Endothelial cell of umbilical vein (primary cell): ENCODE measurements at regions of chr5 and their contacts with region 1.

Region 1: GRCh38 chr5:14108170-14108996 is 34.8 kb upstream of the TRIO start:
- DNase-seq: peak; percentile 77
- H3K4me3 ChIP-seq: peak overlapping the region in 2 of 3 experiments; percentile 5
- H3K27ac ChIP-seq: no peak overlapping the region
- H3K4me1 ChIP-seq: peaks cover 30% of the 10 kb centered on the region
- H3K27me3 ChIP-seq: no peaks in the 10 kb centered on the region
- CTCF ChIP-seq: peak; percentile 62 to 82
- POLR2A ChIP-seq: no peak

Region 2: DNA sequence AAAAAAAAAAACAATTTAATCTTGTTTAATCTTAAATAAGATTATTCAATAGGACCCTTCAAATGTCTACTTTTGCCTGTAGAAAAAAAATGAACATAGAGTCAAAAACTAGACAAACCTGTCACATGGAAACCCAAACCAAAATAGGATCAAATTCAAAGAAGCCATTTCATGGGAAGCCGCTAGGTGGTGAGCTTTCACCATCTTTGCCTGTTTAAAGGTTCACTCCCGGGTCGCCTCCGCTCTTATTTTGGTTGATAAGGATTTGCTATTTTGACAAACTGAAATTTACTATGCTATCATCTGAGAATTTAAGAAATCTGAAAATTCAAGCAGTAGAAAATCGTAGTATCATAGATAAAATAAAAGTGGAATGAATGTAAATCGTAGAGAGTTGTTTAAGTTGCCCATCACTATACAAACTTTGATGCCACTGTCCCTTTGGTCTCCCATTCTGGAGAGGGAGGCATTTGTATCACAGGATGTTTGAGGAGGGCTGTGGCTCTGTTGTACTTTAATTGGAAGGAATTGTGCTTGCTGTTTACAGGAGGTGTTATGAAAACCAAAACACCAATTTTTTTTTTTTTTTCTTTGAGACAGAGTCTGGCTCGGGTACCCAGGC is 120.4 kb before region 1 on chr5:
- CTCF ChIA-PET with region 1: interaction called, 5 read pairs
- POLR2A ChIA-PET with region 1: no interaction called
- dilution Hi-C with region 1: loop called (anchors 25 kb)
- intact Hi-C with region 1: loop called (anchors 1 kb)
- DNase-seq: peak; percentile 64
- H3K4me3 ChIP-seq: no peak overlapping the region
- H3K27ac ChIP-seq: no peak overlapping the region
- H3K4me1 ChIP-seq: peaks cover 16% of the 10 kb centered on the region
- H3K27me3 ChIP-seq: no peaks in the 10 kb centered on the region
- CTCF ChIP-seq: peak; percentile 69 to 84
- POLR2A ChIP-seq: no peak

Region 3: DNA sequence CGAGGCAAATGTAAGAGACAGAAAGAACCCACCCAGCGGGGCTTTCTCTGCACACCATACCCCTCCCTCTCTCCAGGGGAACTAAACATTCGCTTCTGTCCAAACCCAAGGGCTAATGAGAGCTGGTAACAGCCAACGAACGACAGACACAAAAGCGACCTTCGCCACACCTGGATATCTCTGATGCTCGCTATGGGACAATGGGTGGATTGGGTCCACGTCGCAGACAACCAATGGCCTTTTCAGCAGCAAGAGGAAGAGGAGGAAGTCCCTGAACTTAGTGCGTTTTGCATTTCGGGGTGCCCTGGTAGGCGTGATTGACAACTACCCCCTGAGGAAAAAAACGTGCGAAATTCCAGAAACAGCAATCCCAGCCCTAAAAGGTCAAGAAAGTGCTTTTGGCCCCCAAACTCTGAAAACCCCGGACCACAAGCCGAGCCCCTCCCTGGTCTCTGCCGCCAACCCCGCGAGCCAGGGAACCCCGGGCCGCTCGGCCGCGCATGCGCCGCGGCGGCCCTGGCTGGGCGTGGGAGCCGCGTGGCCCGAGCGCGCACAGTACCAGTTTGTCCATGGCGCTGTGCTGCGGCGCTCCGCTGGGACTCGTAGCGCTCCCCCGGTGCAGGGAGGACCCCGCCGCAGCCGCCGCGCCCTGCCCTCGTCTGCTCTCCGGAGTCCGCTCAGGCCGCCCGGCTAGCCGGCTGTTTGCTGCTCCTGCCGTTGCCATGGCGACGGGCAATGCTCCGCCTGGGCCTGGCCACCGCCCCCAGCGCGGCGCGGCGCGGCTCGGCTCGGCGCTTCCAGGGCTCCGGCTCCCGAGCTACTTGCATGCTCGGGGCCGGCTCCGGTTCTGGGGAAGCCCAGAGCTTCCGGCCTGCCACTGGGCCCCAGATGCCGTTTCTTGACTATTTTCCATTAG is 97.0 kb before region 1 on chr5:
- CTCF ChIA-PET with region 1: interaction called, 4 read pairs
- POLR2A ChIA-PET with region 1: no interaction called
- dilution Hi-C with region 1: no loop called
- intact Hi-C with region 1: loop called (anchors 1 kb)
- DNase-seq: peak; percentile 89
- H3K4me3 ChIP-seq: peak overlapping the region; percentile 40 to 71 (median 58)
- H3K27ac ChIP-seq: peak overlapping the region; percentile 23
- H3K4me1 ChIP-seq: peaks cover 5% of the 10 kb centered on the region
- H3K27me3 ChIP-seq: no peaks in the 10 kb centered on the region
- CTCF ChIP-seq: no peak
- POLR2A ChIP-seq: no peak

Region 4: DNA sequence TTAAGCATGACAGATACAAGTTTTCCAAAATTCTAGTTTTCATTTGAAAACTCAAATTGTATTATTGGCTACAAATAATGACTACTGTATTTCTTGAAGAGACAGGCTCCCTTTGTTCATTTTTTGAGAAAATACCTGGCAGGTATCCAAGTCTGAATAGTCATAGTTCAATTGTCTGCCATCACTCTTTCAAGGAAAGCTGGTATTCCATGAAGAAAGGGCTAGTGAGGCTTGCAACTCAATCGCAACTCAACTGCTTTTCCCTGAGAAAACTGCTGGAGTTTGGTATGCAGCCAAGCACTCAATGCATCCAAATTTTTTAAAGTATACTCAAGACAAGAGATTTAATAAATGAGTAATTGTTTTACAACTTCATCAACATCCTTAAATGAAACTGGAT is 26.6 kb before region 1 on chr5:
- CTCF ChIA-PET with region 1: no interaction called
- POLR2A ChIA-PET with region 1: no interaction called
- dilution Hi-C with region 1: no loop called
- intact Hi-C with region 1: no loop called
- DNase-seq: peak; percentile 8
- H3K4me3 ChIP-seq: no peak overlapping the region
- H3K27ac ChIP-seq: no peak overlapping the region
- H3K4me1 ChIP-seq: no peaks in the 10 kb centered on the region
- H3K27me3 ChIP-seq: peaks cover 10 to 23% of the 10 kb centered on the region in 2 experiments
- CTCF ChIP-seq: no peak
- POLR2A ChIP-seq: no peak

Region 5: GRCh38 chr5:14142827-14143548 is 34.6 kb after region 1 on chr5 and contains the start of gene TRIO:
- CTCF ChIA-PET with region 1: interaction called, 4 read pairs
- POLR2A ChIA-PET with region 1: no interaction called
- dilution Hi-C with region 1: no loop called
- intact Hi-C with region 1: loop called (anchors 1 kb)
- DNase-seq: peak; percentile 94
- H3K4me3 ChIP-seq: peak within 1 kb of the TSS; percentile 55 to 98 (median 91)
- H3K27ac ChIP-seq: peak within 1 kb of the TSS; percentile 94
- H3K4me1 ChIP-seq: peaks cover 33% of the 10 kb centered on the region
- H3K27me3 ChIP-seq: peaks cover 9 to 10% of the 10 kb centered on the region in 2 experiments
- CTCF ChIP-seq: peak; percentile 36 to 72
- POLR2A ChIP-seq: peak; percentile 85
- total RNA-seq, gene TRIO: 242 and 248 TPM in 2 replicates

Region 6: DNA sequence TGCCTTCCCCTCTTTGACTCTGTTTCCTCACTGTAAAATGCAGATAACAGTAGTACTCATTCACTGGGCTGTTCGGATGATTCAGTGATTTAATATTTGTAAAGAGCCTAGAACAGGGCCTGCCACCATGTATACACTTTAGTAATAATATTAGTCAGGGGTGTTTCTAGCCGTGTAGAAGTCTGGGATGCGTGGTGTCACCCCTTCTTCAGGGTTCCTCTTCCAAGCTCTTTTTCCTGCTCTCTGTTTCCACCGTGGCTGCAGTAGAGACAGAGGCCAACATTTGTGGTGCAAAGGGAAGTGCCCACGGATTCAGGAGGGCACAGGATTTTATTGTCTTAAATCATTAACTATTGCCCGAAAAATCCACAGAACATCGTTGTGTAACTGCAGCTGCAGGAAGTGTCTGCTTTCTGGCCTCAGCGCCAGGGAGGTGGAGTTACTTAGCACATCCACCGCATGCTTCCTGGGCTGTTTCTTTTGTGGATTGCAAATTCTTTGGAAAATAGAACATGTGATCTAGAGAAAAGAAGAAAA is 96.5 kb after region 1 on chr5:
- CTCF ChIA-PET with region 1: no interaction called
- POLR2A ChIA-PET with region 1: no interaction called
- dilution Hi-C with region 1: no loop called
- intact Hi-C with region 1: loop called (anchors 5 kb)
- DNase-seq: peak; percentile 93
- H3K4me3 ChIP-seq: peak overlapping the region in 1 of 3 experiments; percentile 14
- H3K27ac ChIP-seq: peak overlapping the region; percentile 87
- H3K4me1 ChIP-seq: peaks cover 82% of the 10 kb centered on the region
- H3K27me3 ChIP-seq: no peaks in the 10 kb centered on the region
- CTCF ChIP-seq: no peak
- POLR2A ChIP-seq: no peak

Region 7: GRCh38 chr5:14223372-14223771 is 115.0 kb after region 1 on chr5:
- CTCF ChIA-PET with region 1: no interaction called
- POLR2A ChIA-PET with region 1: no interaction called
- dilution Hi-C with region 1: no loop called
- intact Hi-C with region 1: loop called (anchors 5 kb)
- DNase-seq: peak; percentile 68
- H3K4me3 ChIP-seq: no peak overlapping the region
- H3K27ac ChIP-seq: peak overlapping the region; percentile 36
- H3K4me1 ChIP-seq: peaks cover 55% of the 10 kb centered on the region
- H3K27me3 ChIP-seq: no peaks in the 10 kb centered on the region
- CTCF ChIP-seq: no peak
- POLR2A ChIP-seq: peak; percentile 53

Region 8: DNA sequence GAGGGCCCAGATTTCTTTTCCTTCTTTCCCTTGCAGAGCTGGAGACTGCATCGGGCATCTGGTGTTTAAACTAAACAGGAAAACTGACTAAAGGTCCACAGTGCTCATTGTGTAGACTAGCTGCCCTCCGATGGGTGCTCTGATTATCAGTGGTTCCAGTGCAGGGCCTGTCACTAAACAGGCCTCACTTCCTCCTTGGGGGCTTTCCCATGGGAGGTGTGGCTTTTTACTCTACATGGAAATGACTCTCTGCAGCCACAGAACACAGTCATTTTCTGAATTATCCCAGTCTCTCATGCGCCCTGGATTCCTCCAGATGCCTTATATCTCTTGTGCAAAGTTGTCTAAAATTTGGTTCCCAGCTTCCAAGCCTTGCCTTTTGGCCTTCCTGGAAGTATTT is 233.9 kb after region 1 on chr5:
- CTCF ChIA-PET with region 1: no interaction called
- POLR2A ChIA-PET with region 1: no interaction called
- dilution Hi-C with region 1: no loop called
- intact Hi-C with region 1: loop called (anchors 5 kb)
- DNase-seq: peak; percentile 77
- H3K4me3 ChIP-seq: no peak overlapping the region
- H3K27ac ChIP-seq: peak overlapping the region; percentile 4
- H3K4me1 ChIP-seq: peaks cover 19% of the 10 kb centered on the region
- H3K27me3 ChIP-seq: no peaks in the 10 kb centered on the region
- CTCF ChIP-seq: no peak
- POLR2A ChIP-seq: no peak